ENCODE measurements at regions of chr16 and their contacts with region 1.

Region 1: DNA sequence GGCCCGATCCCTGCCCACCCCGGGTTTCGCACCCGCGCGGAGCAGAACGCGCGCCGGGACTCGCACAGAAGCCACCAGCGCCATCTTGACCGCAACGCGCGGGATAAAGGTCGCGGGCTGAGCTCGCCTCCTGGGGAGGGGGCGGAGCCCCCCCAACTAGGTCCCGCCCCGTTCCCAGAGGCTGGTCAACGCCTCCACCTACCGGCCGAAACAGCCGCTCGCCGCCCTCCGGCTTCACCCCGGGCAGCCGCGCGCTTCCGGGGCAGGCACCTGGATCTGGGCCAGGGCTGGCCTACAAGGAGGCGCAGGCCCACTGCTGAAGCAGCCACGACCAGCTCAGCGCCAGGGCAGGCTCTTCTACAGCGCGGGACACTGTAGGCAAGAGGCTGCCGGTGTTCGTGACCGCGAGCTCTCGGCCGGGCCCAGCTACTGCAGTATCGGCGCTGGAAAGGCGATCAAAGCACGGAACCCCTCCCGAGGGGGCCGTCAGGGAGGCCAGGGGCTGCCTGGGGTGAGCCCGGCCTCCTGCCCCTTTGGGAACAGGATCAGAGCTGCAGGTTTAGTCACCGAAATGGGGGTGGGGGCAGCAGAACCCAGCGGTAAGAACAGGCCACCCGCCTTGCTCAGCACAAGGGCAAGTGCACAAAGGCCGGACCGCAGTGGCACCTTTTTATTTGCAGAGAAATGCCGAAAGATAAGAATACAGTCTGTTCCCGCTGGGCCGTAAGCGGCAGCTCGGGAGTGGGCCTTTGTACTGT is at the start of gene ECI1:
- DNase-seq: peak; percentile 97 to 99 (median 97)
- ATAC-seq: peak; percentile 93
- H3K4me3 ChIP-seq: peak within 1 kb of the TSS; percentile 94
- H3K27ac ChIP-seq: peak within 1 kb of the TSS; percentile 97
- H3K4me1 ChIP-seq: peaks cover 8 to 25% of the 10 kb centered on the region in 2 experiments
- H3K27me3 ChIP-seq: no peaks in the 10 kb centered on the region
- CTCF ChIP-seq: peak; percentile 80 to 88 (median 87)
- EP300 ChIP-seq: peak; percentile 34; the same call in 1 of the 2 replicates
- POLR2A ChIP-seq: peak; percentile 87
- RAD21 ChIP-seq: peak; percentile 82 to 85
- polyA plus RNA-seq, gene ECI1: 4.7 to 7.6 TPM

Region 2: GRCh38 chr16:2170080-2170479 is 81.6 kb before region 1 on chr16:
- CTCF ChIA-PET with region 1: no interaction called
- POLR2A ChIA-PET with region 1: no interaction called
- in situ Hi-C with region 1: no loop called
- intact Hi-C with region 1: no loop called
- DNase-seq: no peak
- ATAC-seq: no peak
- H3K4me3 ChIP-seq: no peak overlapping the region
- H3K27ac ChIP-seq: no peak overlapping the region
- H3K4me1 ChIP-seq: peaks cover 0 to 44% of the 10 kb centered on the region in 2 experiments; a peak in 2 of 5 replicates
- H3K27me3 ChIP-seq: no peaks in the 10 kb centered on the region
- CTCF ChIP-seq: no peak
- EP300 ChIP-seq: no peak
- POLR2A ChIP-seq: no peak
- RAD21 ChIP-seq: no peak

Region 3: DNA sequence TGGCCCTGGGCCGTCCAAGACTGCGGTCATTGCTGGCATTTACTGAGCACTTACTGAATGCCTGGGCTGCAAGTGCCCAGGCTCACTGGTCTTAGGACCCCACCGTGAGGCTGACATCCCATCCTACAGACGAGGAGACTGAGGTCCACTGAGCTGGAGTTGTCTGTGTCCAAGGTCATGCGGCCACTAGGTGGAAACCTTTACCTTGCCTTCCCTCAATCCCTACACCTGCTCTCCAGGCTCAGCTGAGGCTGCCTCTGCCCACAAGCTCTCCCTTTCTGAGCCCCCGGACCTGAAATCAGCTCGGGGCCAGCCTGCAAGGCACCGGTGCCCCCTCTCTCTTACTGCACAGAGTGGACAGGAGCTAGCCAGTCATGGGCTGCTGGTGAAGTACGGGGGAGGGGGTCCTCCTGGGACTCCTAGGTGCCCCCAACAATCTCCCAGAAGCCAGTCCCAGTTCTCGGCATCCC is 56.8 kb before region 1 on chr16:
- CTCF ChIA-PET with region 1: interaction called, 18 read pairs
- POLR2A ChIA-PET with region 1: interaction called, 17 read pairs
- in situ Hi-C with region 1: no loop called
- intact Hi-C with region 1: loop called (anchors 5 kb)
- DNase-seq: peak in 3 of 4 experiments; percentile 45 to 83 (median 73)
- ATAC-seq: peak; percentile 90
- H3K4me3 ChIP-seq: no peak overlapping the region
- H3K27ac ChIP-seq: no peak overlapping the region
- H3K4me1 ChIP-seq: peaks cover 3 to 65% of the 10 kb centered on the region in 2 experiments; a peak in 4 of 5 replicates
- H3K27me3 ChIP-seq: peaks cover 0 to 5% of the 10 kb centered on the region in 2 experiments; a peak in 2 of 5 replicates
- CTCF ChIP-seq: peak; percentile 67 to 84 (median 75)
- EP300 ChIP-seq: no peak
- POLR2A ChIP-seq: no peak
- RAD21 ChIP-seq: peak; percentile 67 to 86

Region 4: DNA sequence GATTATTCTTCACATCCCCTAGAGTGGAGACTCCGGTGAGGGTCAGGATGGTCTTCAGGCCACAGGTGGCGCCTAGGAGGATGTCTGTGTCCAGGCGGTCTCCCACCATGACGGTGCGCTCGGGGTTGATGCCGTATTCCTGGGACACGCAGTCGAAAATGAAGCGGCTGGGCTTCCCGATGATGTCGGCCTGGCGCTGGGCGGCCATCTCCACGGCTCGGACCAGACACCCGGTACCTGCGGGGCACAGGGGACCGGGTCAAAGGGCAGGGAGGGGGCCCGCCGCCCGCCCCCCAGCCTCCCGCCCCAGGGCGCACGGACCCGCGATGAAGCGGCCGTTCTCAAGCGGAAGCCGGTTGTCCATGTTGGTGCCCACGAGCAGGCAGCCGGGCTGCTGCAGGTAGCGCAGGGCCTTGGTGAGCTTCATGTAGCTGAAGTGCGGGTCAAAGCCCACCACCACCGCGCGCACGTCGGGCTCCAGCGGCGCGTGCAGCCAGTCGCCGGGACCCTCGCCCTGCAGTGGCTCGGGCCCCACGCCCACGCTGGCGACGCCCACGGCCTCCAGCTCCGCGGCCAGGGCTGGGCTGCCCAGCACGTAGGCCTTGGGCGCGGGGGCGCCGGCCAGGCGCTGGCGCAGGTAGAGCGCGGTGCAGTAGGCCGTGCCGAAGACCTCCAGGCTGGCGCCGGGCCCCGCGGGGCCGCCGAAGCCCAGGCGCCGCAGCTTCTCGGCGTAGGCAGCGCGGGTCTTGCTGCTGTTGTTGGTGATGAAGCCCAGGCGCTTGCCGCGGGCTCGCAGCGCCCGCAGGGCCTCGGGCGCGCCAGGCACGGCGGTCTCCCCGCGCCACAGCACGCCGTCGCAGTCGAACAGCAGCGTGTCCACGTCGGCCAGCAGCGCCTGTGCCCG is 37.6 kb before region 1 on chr16:
- CTCF ChIA-PET with region 1: no interaction called
- POLR2A ChIA-PET with region 1: interaction called, 15 read pairs
- in situ Hi-C with region 1: no loop called
- intact Hi-C with region 1: no loop called
- DNase-seq: peak in 2 of 4 experiments; percentile 48 to 56
- ATAC-seq: no peak
- H3K4me3 ChIP-seq: peak overlapping the region; percentile 85
- H3K27ac ChIP-seq: peak overlapping the region; percentile 89
- H3K4me1 ChIP-seq: peaks cover 31 to 79% of the 10 kb centered on the region in 2 experiments
- H3K27me3 ChIP-seq: no peaks in the 10 kb centered on the region
- CTCF ChIP-seq: 0 out of 6 replicates have a peak, but pooled peaks of 1 of the 3 experiments have one; percentile 13
- EP300 ChIP-seq: no peak
- POLR2A ChIP-seq: no peak
- RAD21 ChIP-seq: no peak

Region 5: DNA sequence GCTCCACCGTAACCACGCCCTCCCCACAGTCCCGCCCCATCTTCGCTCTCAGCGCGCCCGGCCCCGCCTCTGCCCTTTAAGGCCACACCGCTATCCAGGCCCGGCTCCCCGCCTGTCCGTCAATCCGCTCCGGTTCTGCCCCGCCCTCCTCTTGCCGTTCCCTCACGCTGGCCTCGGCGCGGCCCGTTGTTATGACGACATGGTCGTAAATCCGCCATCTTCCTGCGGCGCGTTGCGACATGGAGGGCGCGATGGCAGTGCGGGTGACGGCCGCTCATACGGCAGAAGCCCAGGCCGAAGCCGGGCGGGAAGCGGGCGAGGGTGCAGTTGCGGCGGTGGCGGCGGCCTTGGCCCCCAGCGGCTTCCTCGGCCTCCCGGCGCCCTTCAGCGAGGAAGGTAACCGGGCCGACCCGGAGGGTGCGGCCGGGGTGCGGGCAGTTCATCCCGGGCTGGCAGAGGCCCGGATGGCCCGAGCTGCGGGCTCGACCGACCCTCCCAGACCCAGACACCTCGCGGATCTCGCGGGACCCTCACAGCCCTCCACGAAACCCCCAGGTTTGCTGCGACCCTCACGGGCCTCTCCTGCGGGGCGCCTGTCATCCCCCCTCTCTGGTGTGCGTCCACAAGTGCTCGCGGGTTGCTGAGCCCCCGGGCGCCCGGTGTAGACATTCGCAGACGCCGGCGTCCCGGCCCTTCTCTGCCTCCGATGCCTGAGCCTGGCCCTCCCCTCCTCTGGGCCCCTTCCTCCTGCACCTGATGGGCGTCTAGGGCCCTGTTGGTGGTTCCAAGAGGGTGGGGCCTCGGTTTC is 28.1 kb before region 1 on chr16 and contains the start of gene E4F1:
- CTCF ChIA-PET with region 1: no interaction called
- POLR2A ChIA-PET with region 1: interaction called, 5 read pairs
- in situ Hi-C with region 1: no loop called
- intact Hi-C with region 1: loop called (anchors 1 kb)
- DNase-seq: peak; percentile 94 to 100 (median 96)
- ATAC-seq: peak; percentile 94
- H3K4me3 ChIP-seq: peak within 1 kb of the TSS; percentile 87
- H3K27ac ChIP-seq: peak within 1 kb of the TSS; percentile 82
- H3K4me1 ChIP-seq: peaks cover 11 to 58% of the 10 kb centered on the region in 2 experiments; a peak in 3 of 5 replicates
- H3K27me3 ChIP-seq: no peaks in the 10 kb centered on the region
- CTCF ChIP-seq: no peak
- EP300 ChIP-seq: 0 out of 2 replicates have a peak, but pooled peaks have one; percentile 6
- POLR2A ChIP-seq: peak; percentile 92
- RAD21 ChIP-seq: no peak
- polyA plus RNA-seq, gene E4F1: 0.48 to 0.96 TPM

Region 6: GRCh38 chr16:2236337-2237101 is 15.1 kb before region 1 on chr16 and contains the start of gene DNASE1L2:
- CTCF ChIA-PET with region 1: no interaction called
- POLR2A ChIA-PET with region 1: interaction called, 39 read pairs
- in situ Hi-C with region 1: no loop called
- intact Hi-C with region 1: no loop called
- DNase-seq: no peak
- ATAC-seq: peak; percentile 7
- H3K4me3 ChIP-seq: no peak within 1 kb of the TSS
- H3K27ac ChIP-seq: no peak within 1 kb of the TSS
- H3K4me1 ChIP-seq: peaks cover 0 to 55% of the 10 kb centered on the region in 2 experiments; a peak in 2 of 5 replicates
- H3K27me3 ChIP-seq: no peaks in the 10 kb centered on the region
- CTCF ChIP-seq: no peak
- EP300 ChIP-seq: no peak
- POLR2A ChIP-seq: peak; percentile 42
- RAD21 ChIP-seq: no peak
- polyA plus RNA-seq, gene DNASE1L2: 0.08 TPM in 1 of 2 experiments, not detected in the other

Region 7: GRCh38 chr16:2267913-2268666 is 16.4 kb after region 1 on chr16 and contains the start of gene RNPS1:
- CTCF ChIA-PET with region 1: no interaction called
- POLR2A ChIA-PET with region 1: interaction called, 40 read pairs
- in situ Hi-C with region 1: no loop called
- intact Hi-C with region 1: loop called (anchors 1 kb)
- DNase-seq: peak; percentile 96 to 99 (median 98)
- ATAC-seq: peak; percentile 96
- H3K4me3 ChIP-seq: peak within 1 kb of the TSS; percentile 79
- H3K27ac ChIP-seq: peak within 1 kb of the TSS; percentile 98
- H3K4me1 ChIP-seq: peaks cover 13 to 59% of the 10 kb centered on the region in 2 experiments; a peak in 4 of 5 replicates
- H3K27me3 ChIP-seq: no peaks in the 10 kb centered on the region
- CTCF ChIP-seq: no peak
- EP300 ChIP-seq: peak; percentile 46; the same call in 1 of the 2 replicates
- POLR2A ChIP-seq: peak; percentile 97
- RAD21 ChIP-seq: no peak
- polyA plus RNA-seq, gene RNPS1: 44.9 to 50.6 TPM

Measured in K562 (cell line).